CD8-positive, alpha-beta T cell (primary cell): ENCODE measurements at regions of chr12 and their contacts with region 1.

Region 1: GRCh38 chr12:55642669-55643068 is 6.0 kb downstream of the OR10P1 start:
- DNase-seq: peak in 3 of 9 experiments; percentile 20 to 30 (median 21)
- ATAC-seq: no peak
- H3K4me3 ChIP-seq: no peak overlapping the region
- H3K4me3 Mint-ChIP-seq: no peak overlapping the region
- H3K27ac ChIP-seq: no peak overlapping the region
- H3K27ac Mint-ChIP-seq: no peak overlapping the region
- H3K4me1 ChIP-seq: peaks cover 16% of the 10 kb centered on the region
- H3K4me1 Mint-ChIP-seq: peaks cover 22% of the 10 kb centered on the region
- H3K27me3 ChIP-seq: no peaks in the 10 kb centered on the region
- H3K27me3 Mint-ChIP-seq: peaks cover under 1% of the 10 kb centered on the region
- CTCF ChIP-seq: no peak

Region 2: GRCh38 chr12:55196188-55196587 is 446.5 kb before region 1 on chr12:
- CTCF ChIA-PET with region 1: no interaction called
- POLR2A ChIA-PET with region 1: no interaction called
- intact Hi-C with region 1: no loop called
- DNase-seq: no peak
- ATAC-seq: no peak
- H3K4me3 ChIP-seq: no peak overlapping the region
- H3K4me3 Mint-ChIP-seq: no peak overlapping the region
- H3K27ac ChIP-seq: no peak overlapping the region
- H3K27ac Mint-ChIP-seq: no peak overlapping the region
- H3K4me1 ChIP-seq: no peaks in the 10 kb centered on the region
- H3K4me1 Mint-ChIP-seq: no peaks in the 10 kb centered on the region
- H3K27me3 ChIP-seq: peaks cover 0 to 5% of the 10 kb centered on the region in 2 experiments
- H3K27me3 Mint-ChIP-seq: peaks cover 48% of the 10 kb centered on the region
- CTCF ChIP-seq: no peak

Region 3: GRCh38 chr12:55666538-55666937 is 23.9 kb after region 1 on chr12:
- CTCF ChIA-PET with region 1: interaction called, 10 read pairs
- POLR2A ChIA-PET with region 1: interaction called, 3 read pairs
- intact Hi-C with region 1: no loop called
- DNase-seq: no peak
- ATAC-seq: no peak
- H3K4me3 ChIP-seq: no peak overlapping the region
- H3K4me3 Mint-ChIP-seq: no peak overlapping the region
- H3K27ac ChIP-seq: no peak overlapping the region
- H3K27ac Mint-ChIP-seq: no peak overlapping the region
- H3K4me1 ChIP-seq: no peaks in the 10 kb centered on the region
- H3K4me1 Mint-ChIP-seq: no peaks in the 10 kb centered on the region
- H3K27me3 ChIP-seq: no peaks in the 10 kb centered on the region
- H3K27me3 Mint-ChIP-seq: peaks cover 9% of the 10 kb centered on the region
- CTCF ChIP-seq: no peak

Region 4: DNA sequence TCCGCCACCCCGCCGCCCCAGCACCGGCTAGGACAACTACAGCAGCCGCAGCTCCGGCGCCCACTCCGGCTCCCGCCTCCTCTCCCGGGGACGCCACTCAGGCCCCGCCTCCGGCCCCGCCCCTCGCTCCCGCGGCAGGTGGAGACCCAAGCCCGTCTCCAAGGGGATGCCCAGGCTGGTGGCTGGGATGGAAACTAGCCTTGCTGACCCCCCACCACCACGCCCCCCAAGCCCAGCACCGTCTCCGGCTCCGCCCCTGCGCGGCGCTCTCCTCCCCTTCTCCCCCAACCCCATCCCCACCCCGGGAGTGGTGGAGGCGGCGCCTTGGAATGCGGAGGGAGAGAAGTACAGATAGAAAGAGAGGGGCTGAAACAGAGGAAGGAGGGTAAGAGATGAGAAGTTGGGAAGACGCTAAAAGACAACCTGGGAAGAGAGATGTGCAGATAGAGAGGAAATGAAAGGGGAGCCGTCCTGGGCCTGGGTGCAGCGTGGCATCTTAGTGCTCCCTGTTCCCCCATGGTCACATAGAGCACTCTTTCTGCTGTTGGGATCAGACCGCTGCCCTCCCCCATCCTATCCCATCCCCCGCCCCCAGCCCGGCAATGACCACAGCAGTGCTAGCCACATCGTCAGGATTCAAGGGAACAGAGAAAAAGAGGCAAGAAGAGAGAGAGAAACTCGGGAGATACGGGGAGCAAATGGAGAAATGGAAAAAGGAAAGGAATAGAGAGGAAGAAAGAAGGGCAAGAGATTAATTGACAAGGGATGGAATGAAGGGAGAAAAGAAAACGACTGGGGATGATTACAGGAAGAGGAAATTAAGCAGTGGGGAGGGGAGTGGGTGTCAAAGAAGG is 65.4 kb after region 1 on chr12 and contains the start of gene ITGA7:
- CTCF ChIA-PET with region 1: no interaction called
- POLR2A ChIA-PET with region 1: no interaction called
- intact Hi-C with region 1: loop called in 1 of 2 experiments (anchors 2 kb)
- DNase-seq: peak in 8 of 9 experiments; percentile 32 to 70 (median 63)
- ATAC-seq: peak; percentile 79
- H3K4me3 ChIP-seq: peak within 1 kb of the TSS; percentile 40 to 49
- H3K4me3 Mint-ChIP-seq: peak within 1 kb of the TSS; percentile 90
- H3K27ac ChIP-seq: no peak within 1 kb of the TSS
- H3K27ac Mint-ChIP-seq: no peak within 1 kb of the TSS
- H3K4me1 ChIP-seq: peaks cover 16% of the 10 kb centered on the region
- H3K4me1 Mint-ChIP-seq: peaks cover 17% of the 10 kb centered on the region
- H3K27me3 ChIP-seq: peaks cover 3 to 10% of the 10 kb centered on the region in 2 experiments
- H3K27me3 Mint-ChIP-seq: peaks cover 19% of the 10 kb centered on the region
- CTCF ChIP-seq: no peak
- total RNA-seq, gene ITGA7: 1.0 to 1.1 TPM

Region 5: GRCh38 chr12:55724226-55724939 is 81.7 kb after region 1 on chr12:
- CTCF ChIA-PET with region 1: no interaction called
- POLR2A ChIA-PET with region 1: no interaction called
- intact Hi-C with region 1: no loop called
- DNase-seq: peak in 8 of 9 experiments; percentile 53 to 78 (median 75)
- ATAC-seq: peak; percentile 59
- H3K4me3 ChIP-seq: no peak overlapping the region
- H3K4me3 Mint-ChIP-seq: no peak overlapping the region
- H3K27ac ChIP-seq: peak overlapping the region in 1 of 2 experiments; percentile 25
- H3K27ac Mint-ChIP-seq: no peak overlapping the region
- H3K4me1 ChIP-seq: peaks cover 14% of the 10 kb centered on the region
- H3K4me1 Mint-ChIP-seq: peaks cover 35% of the 10 kb centered on the region
- H3K27me3 ChIP-seq: no peaks in the 10 kb centered on the region
- H3K27me3 Mint-ChIP-seq: no peaks in the 10 kb centered on the region
- CTCF ChIP-seq: peak; percentile 66

Region 6: GRCh38 chr12:55760663-55761062 is 118.0 kb after region 1 on chr12:
- CTCF ChIA-PET with region 1: no interaction called
- POLR2A ChIA-PET with region 1: no interaction called
- intact Hi-C with region 1: no loop called
- DNase-seq: no peak
- ATAC-seq: no peak
- H3K4me3 ChIP-seq: no peak overlapping the region
- H3K4me3 Mint-ChIP-seq: no peak overlapping the region
- H3K27ac ChIP-seq: no peak overlapping the region
- H3K27ac Mint-ChIP-seq: no peak overlapping the region
- H3K4me1 ChIP-seq: no peaks in the 10 kb centered on the region
- H3K4me1 Mint-ChIP-seq: peaks cover 2% of the 10 kb centered on the region
- H3K27me3 ChIP-seq: no peaks in the 10 kb centered on the region
- H3K27me3 Mint-ChIP-seq: no peaks in the 10 kb centered on the region
- CTCF ChIP-seq: no peak

Region 7: DNA sequence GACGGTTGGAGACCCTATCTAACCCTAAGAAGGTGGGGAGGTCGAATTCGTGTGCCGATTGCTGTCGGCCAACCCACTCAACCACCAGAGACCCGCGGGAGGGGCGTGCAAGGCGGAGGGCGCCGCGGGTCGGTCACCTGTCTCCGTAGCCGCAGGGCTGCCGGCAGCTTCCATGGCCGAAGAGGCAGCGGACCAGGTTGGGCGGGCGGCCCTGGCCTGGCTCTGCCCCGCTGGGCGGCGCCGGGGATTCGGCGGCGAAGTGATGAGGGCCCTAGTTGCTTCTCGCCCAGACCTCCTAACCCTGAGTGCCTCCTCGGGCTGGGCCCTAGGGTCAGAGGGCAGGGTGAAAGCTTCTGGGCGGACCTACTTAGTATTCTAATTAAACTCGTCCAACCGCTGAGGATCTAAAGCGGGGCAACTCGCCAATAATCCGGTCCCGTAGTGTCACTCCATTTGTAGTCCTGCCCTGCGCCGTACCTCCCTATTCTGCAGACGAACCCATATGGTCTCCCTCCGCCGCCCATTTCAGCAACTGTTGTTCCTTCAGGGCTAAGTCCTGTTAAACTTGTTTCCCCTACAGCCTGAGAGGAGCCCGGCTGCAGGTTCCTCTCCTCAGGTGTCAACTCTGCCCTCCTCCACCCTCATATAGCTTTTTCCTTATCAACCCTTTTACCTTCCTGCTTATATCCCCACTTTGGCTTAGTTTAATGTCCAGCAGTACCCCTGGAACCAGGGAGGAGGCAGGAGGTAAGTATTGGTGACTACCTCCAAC is 285.1 kb after region 1 on chr12 and contains the start of gene PYM1:
- CTCF ChIA-PET with region 1: no interaction called
- POLR2A ChIA-PET with region 1: no interaction called
- intact Hi-C with region 1: no loop called
- DNase-seq: peak; percentile 23 to 86 (median 66)
- ATAC-seq: peak; percentile 0
- H3K4me3 ChIP-seq: peak within 1 kb of the TSS; percentile 90 to 98
- H3K4me3 Mint-ChIP-seq: peak within 1 kb of the TSS; percentile 99
- H3K27ac ChIP-seq: peak within 1 kb of the TSS; percentile 65 to 80
- H3K27ac Mint-ChIP-seq: peak within 1 kb of the TSS; percentile 95
- H3K4me1 ChIP-seq: peaks cover 40% of the 10 kb centered on the region
- H3K4me1 Mint-ChIP-seq: peaks cover 50% of the 10 kb centered on the region
- H3K27me3 ChIP-seq: no peaks in the 10 kb centered on the region
- H3K27me3 Mint-ChIP-seq: no peaks in the 10 kb centered on the region
- CTCF ChIP-seq: no peak
- total RNA-seq, gene PYM1: 10.1 to 11.5 TPM